GM12878 (cell line): ENCODE measurements at regions of chr1 and their contacts with region 1.

Region 1: GRCh38 chr1:206544562-206545257 is 37.4 kb downstream of the RASSF5 start:
- DNase-seq: no peak
- ATAC-seq: peak; percentile 98
- H3K4me3 ChIP-seq: no peak overlapping the region
- H3K27ac ChIP-seq: no peak overlapping the region
- H3K4me1 ChIP-seq: no peaks in the 10 kb centered on the region; the same call in 1 of the 2 replicates
- H3K27me3 ChIP-seq: no peaks in the 10 kb centered on the region
- CTCF ChIP-seq: peak; percentile 86 to 91 (median 88)
- EP300 ChIP-seq: no peak
- POLR2A ChIP-seq: no peak
- RAD21 ChIP-seq: peak; percentile 98

Region 2: DNA sequence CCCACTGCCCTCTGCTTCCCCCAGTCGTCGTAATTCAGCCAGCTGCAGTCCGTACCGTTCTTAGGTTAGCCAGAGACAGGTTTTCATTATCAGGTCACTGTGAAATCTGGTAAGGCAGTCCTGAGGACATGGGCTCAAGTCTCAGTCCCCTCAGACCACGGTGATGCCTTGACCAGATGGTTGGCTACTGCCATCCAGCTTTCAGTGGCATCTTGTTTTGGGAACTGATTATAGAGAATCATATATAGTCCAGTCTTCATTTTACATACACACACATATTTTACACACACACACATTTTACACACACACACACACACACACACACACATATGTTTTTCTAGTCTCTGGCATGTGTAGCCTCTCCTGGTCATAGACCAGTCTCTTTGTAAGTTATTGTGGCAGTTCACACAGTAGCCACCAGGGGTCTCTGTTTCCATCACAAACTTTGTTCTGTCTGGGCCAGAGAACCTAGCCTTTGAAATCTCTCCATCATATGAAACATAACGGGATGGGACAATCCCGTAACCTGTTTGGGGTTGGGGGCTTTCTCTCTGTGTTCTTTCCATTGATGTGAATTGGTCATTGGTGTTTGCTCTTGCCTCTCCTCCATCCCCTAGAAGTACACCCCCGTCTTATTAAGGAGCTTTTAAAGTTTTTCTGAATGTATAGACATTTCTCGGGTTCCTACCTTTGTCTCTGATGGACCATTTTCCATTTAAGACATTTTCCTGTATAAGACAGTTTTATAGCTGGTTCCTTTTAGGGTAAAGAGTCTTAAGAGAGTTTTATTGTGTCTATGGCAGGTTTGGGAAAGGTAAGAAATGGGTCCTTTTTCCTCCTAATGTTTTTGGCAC is 82.9 kb before region 1 on chr1:
- CTCF ChIA-PET with region 1: interaction called, 22 read pairs
- POLR2A ChIA-PET with region 1: interaction called, 3 read pairs
- RAD21 ChIA-PET with region 1: interaction called, 4 read pairs
- SMC1A ChIA-PET with region 1: interaction called, 7 read pairs
- in situ Hi-C with region 1: no loop called
- intact Hi-C with region 1: no loop called
- DNase-seq: no peak
- ATAC-seq: peak; percentile 90
- H3K4me3 ChIP-seq: no peak overlapping the region
- H3K27ac ChIP-seq: no peak overlapping the region
- H3K4me1 ChIP-seq: peaks cover 23% of the 10 kb centered on the region
- H3K27me3 ChIP-seq: no peaks in the 10 kb centered on the region
- CTCF ChIP-seq: peak; percentile 76 to 86 (median 84)
- EP300 ChIP-seq: no peak
- POLR2A ChIP-seq: no peak
- RAD21 ChIP-seq: peak; percentile 73

Region 3: DNA sequence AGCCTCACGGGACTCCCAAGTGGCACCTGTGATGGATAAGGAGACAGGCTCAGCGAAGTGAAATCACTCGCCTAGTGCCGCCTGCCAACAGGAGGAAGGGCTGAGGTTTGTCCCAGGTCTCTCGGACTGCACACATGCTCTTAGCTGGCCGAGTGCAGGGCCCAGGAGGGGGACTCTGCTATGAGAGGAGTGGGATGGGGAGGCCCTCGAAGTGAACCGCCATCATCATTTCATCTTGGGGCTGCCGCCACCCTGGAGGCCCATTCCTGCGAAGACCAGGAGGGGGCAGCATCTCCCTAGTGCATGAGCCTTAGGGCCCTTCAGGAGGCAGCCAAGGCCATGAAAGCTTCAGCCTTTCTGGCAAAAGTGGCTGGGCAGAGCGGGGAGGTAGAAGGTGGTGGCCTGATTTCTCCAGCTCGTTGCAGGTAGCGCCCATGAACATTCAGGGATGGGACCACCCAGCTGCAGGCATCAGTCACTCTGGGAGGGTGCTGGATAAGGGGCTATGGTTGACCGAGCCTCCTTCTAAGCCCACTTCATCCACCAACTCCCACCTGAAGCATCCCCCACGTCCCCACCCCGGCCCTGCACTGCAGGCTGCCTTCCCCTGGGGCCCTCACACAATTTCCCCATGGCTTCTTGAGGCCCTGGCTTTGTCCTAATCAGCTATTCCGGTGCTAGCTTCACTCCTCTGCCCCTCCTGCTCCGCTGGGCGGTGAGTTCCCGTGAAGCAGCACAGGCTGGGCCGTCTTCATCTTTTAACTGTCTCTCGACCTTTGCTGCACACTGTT is 54.5 kb before region 1 on chr1:
- CTCF ChIA-PET with region 1: interaction called, 55 read pairs
- POLR2A ChIA-PET with region 1: interaction called, 3 read pairs
- RAD21 ChIA-PET with region 1: interaction called, 23 read pairs
- SMC1A ChIA-PET with region 1: interaction called, 19 read pairs
- in situ Hi-C with region 1: no loop called
- intact Hi-C with region 1: no loop called
- DNase-seq: no peak
- ATAC-seq: peak; percentile 99
- H3K4me3 ChIP-seq: no peak overlapping the region
- H3K27ac ChIP-seq: no peak overlapping the region
- H3K4me1 ChIP-seq: peaks cover 5% of the 10 kb centered on the region
- H3K27me3 ChIP-seq: no peaks in the 10 kb centered on the region
- CTCF ChIP-seq: peak; percentile 91 to 97 (median 96)
- EP300 ChIP-seq: no peak
- POLR2A ChIP-seq: no peak
- RAD21 ChIP-seq: peak; percentile 97

Region 4: DNA sequence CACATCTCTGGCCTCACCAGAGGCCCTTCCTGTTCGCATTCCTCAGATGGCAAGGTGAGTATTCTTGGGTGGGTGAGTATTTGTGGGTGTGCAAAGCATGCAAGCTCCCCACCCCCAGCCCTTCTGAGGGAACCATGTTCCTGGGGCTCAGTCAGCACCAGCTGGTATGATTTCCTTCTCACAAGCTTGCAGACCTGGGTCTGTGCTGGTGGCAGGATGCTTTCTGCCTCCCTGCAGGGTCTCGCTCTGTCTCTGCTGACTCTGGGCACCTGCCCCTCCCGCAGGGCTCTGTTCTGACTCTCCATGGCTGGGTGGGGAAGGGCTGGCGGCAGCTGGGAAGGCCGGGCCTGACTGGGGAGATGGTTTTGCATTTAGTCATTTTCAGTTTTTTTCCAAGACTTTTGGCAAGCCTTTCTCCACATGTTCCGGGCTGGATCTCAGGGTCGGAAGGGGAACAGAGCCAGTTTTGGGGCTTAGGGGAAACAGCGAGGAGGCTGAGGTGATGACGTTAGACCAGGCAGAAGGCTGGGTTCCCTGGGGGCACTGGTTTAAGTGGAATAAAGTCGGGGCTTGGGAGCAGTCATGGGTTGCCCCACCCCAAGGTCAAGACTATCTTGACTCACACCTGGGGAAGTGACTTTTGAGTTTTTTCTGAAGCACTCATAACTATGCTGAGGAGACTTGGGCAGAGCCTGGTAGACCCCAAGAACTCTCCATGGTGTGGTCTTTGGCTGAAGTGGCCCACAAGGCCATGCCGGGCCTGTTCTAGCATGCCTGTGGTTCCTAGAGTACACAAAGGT is 31.2 kb before region 1 on chr1:
- CTCF ChIA-PET with region 1: interaction called, 11 read pairs
- POLR2A ChIA-PET with region 1: no interaction called
- RAD21 ChIA-PET with region 1: interaction called, 9 read pairs
- SMC1A ChIA-PET with region 1: interaction called, 6 read pairs
- in situ Hi-C with region 1: no loop called
- intact Hi-C with region 1: no loop called
- DNase-seq: no peak
- ATAC-seq: no peak
- H3K4me3 ChIP-seq: no peak overlapping the region
- H3K27ac ChIP-seq: no peak overlapping the region
- H3K4me1 ChIP-seq: peaks cover 7% of the 10 kb centered on the region; the same call in 1 of the 2 replicates
- H3K27me3 ChIP-seq: no peaks in the 10 kb centered on the region
- CTCF ChIP-seq: no peak
- EP300 ChIP-seq: no peak
- POLR2A ChIP-seq: no peak
- RAD21 ChIP-seq: no peak

Region 5: GRCh38 chr1:206563367-206564207 is 18.9 kb after region 1 on chr1:
- CTCF ChIA-PET with region 1: interaction called, 237 read pairs
- POLR2A ChIA-PET with region 1: interaction called, 4 read pairs
- RAD21 ChIA-PET with region 1: interaction called, 95 read pairs
- SMC1A ChIA-PET with region 1: interaction called, 35 read pairs
- in situ Hi-C with region 1: no loop called
- intact Hi-C with region 1: no loop called
- DNase-seq: no peak
- ATAC-seq: peak; percentile 9
- H3K4me3 ChIP-seq: peak overlapping the region; percentile 56
- H3K27ac ChIP-seq: peak overlapping the region; percentile 81
- H3K4me1 ChIP-seq: peaks cover 61% of the 10 kb centered on the region
- H3K27me3 ChIP-seq: no peaks in the 10 kb centered on the region
- CTCF ChIP-seq: no peak
- EP300 ChIP-seq: no peak
- POLR2A ChIP-seq: no peak
- RAD21 ChIP-seq: no peak

Region 6: DNA sequence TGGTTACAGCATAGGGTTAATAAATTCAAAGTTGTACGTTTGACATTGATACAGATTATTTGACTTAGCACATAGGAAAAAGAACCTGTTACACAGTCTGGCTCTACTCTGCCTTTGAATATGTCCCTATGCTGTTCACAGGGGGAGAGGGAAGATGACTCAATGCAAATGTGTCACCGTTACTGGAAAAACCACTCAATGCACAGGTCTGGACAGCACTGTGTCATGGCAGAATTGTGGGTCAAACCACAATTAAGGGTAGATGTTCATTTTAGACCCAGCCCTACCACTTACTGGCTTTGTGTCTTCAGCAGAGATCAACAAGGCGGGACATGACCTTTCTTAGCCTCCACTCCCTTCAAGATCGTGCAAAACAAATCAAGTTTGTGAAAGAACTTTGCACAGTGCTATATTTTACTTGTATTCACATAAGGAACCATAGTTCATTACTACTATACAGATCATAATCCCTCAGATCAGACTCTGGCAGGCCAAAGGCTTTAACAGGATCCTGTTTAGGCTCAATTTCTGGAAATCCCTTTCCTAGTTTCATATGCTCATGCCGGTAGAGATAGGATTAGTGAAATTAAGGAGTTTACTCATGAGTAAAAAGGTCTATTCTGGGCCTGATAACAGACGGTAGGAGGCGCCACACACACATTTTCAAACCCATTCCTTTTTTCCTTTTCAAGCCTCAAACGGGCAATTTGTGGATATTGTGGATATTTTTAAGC is 45.5 kb after region 1 on chr1:
- CTCF ChIA-PET with region 1: interaction called, 440 read pairs
- POLR2A ChIA-PET with region 1: interaction called, 6 read pairs
- RAD21 ChIA-PET with region 1: interaction called, 14 read pairs
- SMC1A ChIA-PET with region 1: interaction called, 311 read pairs
- in situ Hi-C with region 1: no loop called
- intact Hi-C with region 1: no loop called
- DNase-seq: no peak
- ATAC-seq: peak; percentile 89
- H3K4me3 ChIP-seq: no peak overlapping the region
- H3K27ac ChIP-seq: peak overlapping the region; percentile 34
- H3K4me1 ChIP-seq: peaks cover 6% of the 10 kb centered on the region; the same call in 1 of the 2 replicates
- H3K27me3 ChIP-seq: no peaks in the 10 kb centered on the region
- CTCF ChIP-seq: peak; percentile 38 to 58 (median 42); a peak in 5 of 6 replicates
- EP300 ChIP-seq: no peak
- POLR2A ChIP-seq: peak; percentile 48; the same call in 1 of the 2 replicates
- RAD21 ChIP-seq: 0 out of 2 replicates have a peak, but pooled peaks have one; percentile 26

Region 7: GRCh38 chr1:206651958-206652890 is 107.5 kb after region 1 on chr1:
- CTCF ChIA-PET with region 1: no interaction called
- POLR2A ChIA-PET with region 1: no interaction called
- RAD21 ChIA-PET with region 1: no interaction called
- SMC1A ChIA-PET with region 1: no interaction called
- in situ Hi-C with region 1: no loop called
- intact Hi-C with region 1: no loop called
- DNase-seq: no peak
- ATAC-seq: peak; percentile 30; the same call in 2 of the 3 replicates
- H3K4me3 ChIP-seq: no peak overlapping the region
- H3K27ac ChIP-seq: no peak overlapping the region
- H3K4me1 ChIP-seq: no peaks in the 10 kb centered on the region
- H3K27me3 ChIP-seq: no peaks in the 10 kb centered on the region
- CTCF ChIP-seq: no peak
- EP300 ChIP-seq: no peak
- POLR2A ChIP-seq: no peak
- RAD21 ChIP-seq: no peak

Region 8: DNA sequence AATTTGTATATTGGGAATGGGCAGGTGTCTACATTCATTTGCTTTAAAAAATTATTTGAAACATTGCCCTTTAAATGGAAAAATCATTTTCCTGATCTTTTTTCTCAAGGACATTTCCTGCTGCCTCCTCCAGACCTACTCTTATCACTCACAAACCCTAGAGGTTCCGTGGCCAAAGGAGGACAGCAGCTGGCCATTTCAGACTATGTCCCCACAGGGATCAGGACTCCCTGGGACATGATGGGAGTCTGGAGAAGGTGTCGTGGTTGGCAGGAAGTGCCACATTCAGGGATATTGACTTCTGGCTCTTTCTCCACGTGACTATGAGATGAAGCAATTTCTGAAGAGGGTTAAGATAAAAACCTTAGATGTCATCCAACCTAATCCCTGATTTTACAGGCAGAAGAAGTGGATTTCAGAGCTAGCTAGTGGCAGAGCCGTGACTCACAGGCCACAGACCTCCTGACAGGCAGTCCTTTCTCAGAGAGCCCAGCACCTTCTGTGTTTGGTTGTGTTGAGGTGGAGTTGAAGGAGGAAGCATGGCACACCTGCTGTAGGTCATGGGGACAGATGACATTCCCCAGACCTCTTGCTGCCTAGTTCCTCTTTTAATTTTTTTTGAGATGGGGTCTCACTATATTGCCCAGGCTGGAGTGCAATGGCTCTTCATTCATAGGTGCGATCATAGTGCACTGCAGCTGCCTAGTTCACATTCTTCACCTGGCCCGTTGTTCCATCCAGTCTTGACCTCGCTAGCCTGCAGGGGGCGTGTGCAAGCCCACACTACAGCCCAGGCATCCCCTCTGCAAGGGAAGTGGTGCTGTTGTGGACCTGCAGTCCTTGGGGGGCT is 253.0 kb after region 1 on chr1:
- CTCF ChIA-PET with region 1: no interaction called
- POLR2A ChIA-PET with region 1: no interaction called
- RAD21 ChIA-PET with region 1: no interaction called
- SMC1A ChIA-PET with region 1: no interaction called
- in situ Hi-C with region 1: no loop called
- intact Hi-C with region 1: no loop called
- DNase-seq: no peak
- ATAC-seq: peak; percentile 31; the same call in 2 of the 3 replicates
- H3K4me3 ChIP-seq: no peak overlapping the region
- H3K27ac ChIP-seq: no peak overlapping the region
- H3K4me1 ChIP-seq: peaks cover 28% of the 10 kb centered on the region
- H3K27me3 ChIP-seq: no peaks in the 10 kb centered on the region
- CTCF ChIP-seq: peak; percentile 44 to 78 (median 73)
- EP300 ChIP-seq: no peak
- POLR2A ChIP-seq: no peak
- RAD21 ChIP-seq: peak; percentile 41